ENCODE measurements at regions of chr13 and their contacts with region 1.

Region 1: GRCh38 chr13:48908381-48909055 is 67.2 kb upstream of the FNDC3A start:
- DNase-seq: peak; percentile 80
- ATAC-seq: peak; percentile 37
- H3K4me3 ChIP-seq: peak overlapping the region; percentile 22; the same call in 1 of the 2 replicates
- H3K27ac ChIP-seq: peak overlapping the region; percentile 93
- H3K4me1 ChIP-seq: peaks cover 18% of the 10 kb centered on the region
- H3K27me3 ChIP-seq: no peaks in the 10 kb centered on the region
- CTCF ChIP-seq: no peak

Region 2: GRCh38 chr13:48818495-48819031 is 90.0 kb before region 1 on chr13:
- CTCF ChIA-PET with region 1: no interaction called
- POLR2A ChIA-PET with region 1: no interaction called
- intact Hi-C with region 1: loop called (anchors 2 kb)
- DNase-seq: peak; percentile 82
- ATAC-seq: peak; percentile 89
- H3K4me3 ChIP-seq: no peak overlapping the region
- H3K27ac ChIP-seq: peak overlapping the region; percentile 84
- H3K4me1 ChIP-seq: peaks cover 32% of the 10 kb centered on the region
- H3K27me3 ChIP-seq: no peaks in the 10 kb centered on the region
- CTCF ChIP-seq: no peak

Region 3: GRCh38 chr13:48892053-48892690 is 16.3 kb before region 1 on chr13:
- CTCF ChIA-PET with region 1: no interaction called
- POLR2A ChIA-PET with region 1: no interaction called
- intact Hi-C with region 1: loop called (anchors 2 kb)
- DNase-seq: peak; percentile 86
- ATAC-seq: peak; percentile 95
- H3K4me3 ChIP-seq: no peak overlapping the region
- H3K27ac ChIP-seq: peak overlapping the region; percentile 99
- H3K4me1 ChIP-seq: peaks cover 20% of the 10 kb centered on the region
- H3K27me3 ChIP-seq: no peaks in the 10 kb centered on the region
- CTCF ChIP-seq: no peak

Region 4: GRCh38 chr13:48983331-48983730 is 74.8 kb after region 1 on chr13:
- CTCF ChIA-PET with region 1: no interaction called
- POLR2A ChIA-PET with region 1: no interaction called
- intact Hi-C with region 1: loop called (anchors 2 kb)
- DNase-seq: peak; percentile 65
- ATAC-seq: peak; percentile 91
- H3K4me3 ChIP-seq: no peak overlapping the region
- H3K27ac ChIP-seq: 0 out of 2 replicates have a peak overlapping the region, but pooled peaks have one; percentile 11
- H3K4me1 ChIP-seq: peaks cover 20% of the 10 kb centered on the region
- H3K27me3 ChIP-seq: no peaks in the 10 kb centered on the region
- CTCF ChIP-seq: no peak

Measured in PC-3 (cell line).